Ascending aorta (tissue), 2 donors: ENCODE measurements at regions of chr3 and their contacts with region 1.

Region 1: DNA sequence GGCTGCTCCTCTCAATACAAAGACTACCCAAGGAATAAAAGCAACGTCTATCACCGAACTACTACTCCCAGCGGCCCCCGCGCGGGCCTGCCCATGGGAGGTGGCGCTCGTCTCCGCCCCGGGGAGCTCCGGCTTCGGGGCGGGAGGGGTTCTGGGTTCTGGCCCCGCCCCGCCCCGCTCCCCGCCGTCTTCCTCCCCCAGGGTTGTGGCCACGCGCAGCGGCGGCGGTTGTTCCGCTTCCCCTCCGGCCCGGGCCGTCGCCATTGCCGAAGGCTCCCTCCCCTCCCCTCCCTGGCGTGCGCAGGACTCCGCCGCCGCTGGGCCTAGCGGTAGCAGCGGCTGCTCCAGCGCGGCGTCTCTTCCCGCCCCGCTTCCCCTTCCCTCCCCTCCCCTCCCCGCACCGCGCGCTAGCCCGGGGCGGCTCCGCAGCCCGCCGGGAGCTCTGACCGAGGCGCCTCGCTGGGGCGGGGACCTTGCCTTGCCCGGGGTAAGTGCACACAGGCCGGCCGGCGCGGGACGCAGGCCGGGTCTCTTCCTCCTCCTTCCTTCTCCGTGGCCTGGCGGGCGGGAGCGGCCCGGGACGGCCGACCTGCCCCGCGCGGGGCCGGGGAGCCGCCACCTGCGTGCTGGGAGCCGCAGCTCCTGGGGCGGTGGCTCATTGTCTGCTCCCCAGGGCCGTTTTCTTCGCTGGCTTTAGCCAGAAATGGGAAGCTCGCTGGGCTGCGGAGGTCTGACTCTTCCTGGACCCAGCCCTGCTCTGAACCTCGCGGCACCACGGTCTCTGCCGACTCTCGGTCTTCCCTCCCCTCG is at the start of gene PAK2:
- DNase-seq: peak; percentile 70 to 95
- H3K4me3 ChIP-seq: peak within 1 kb of the TSS; percentile 80 to 92
- H3K27ac ChIP-seq: peak within 1 kb of the TSS; percentile 98 to 99
- H3K4me1 ChIP-seq: peaks cover 4 to 12% of the 10 kb centered on the region in 2 donors
- H3K27me3 ChIP-seq: no peaks in the 10 kb centered on the region
- CTCF ChIP-seq: no peak
- total RNA-seq, gene PAK2: 24.4 TPM

Region 2: GRCh38 chr3:196317687-196318467 is 422.0 kb before region 1 on chr3 and contains the start of gene DYNLT2B:
- intact Hi-C with region 1: no loop called
- DNase-seq: peak; percentile 49 to 91
- H3K4me3 ChIP-seq: peak within 1 kb of the TSS; percentile 92 to 97
- H3K27ac ChIP-seq: peak within 1 kb of the TSS; percentile 88 to 89
- H3K4me1 ChIP-seq: no peaks in the 10 kb centered on the region
- H3K27me3 ChIP-seq: no peaks in the 10 kb centered on the region
- CTCF ChIP-seq: no peak
- total RNA-seq, gene DYNLT2B: not detected

Region 3: GRCh38 chr3:196711838-196712513 is 27.9 kb before region 1 on chr3 and contains the starts of genes CEP19 and PIGX:
- intact Hi-C with region 1: loop called (anchors 1 kb)
- DNase-seq: peak; percentile 27 to 90
- H3K4me3 ChIP-seq: peak within 1 kb of the TSS; percentile 85 to 87
- H3K27ac ChIP-seq: peak within 1 kb of the TSS; percentile 86 to 91
- H3K4me1 ChIP-seq: peaks cover 0 to 8% of the 10 kb centered on the region in 2 donors
- H3K27me3 ChIP-seq: no peaks in the 10 kb centered on the region
- CTCF ChIP-seq: no peak
- total RNA-seq, gene CEP19: 2.6 TPM
- total RNA-seq, gene PIGX: 47.7 TPM